ENCODE measurements at regions of chr14 and their contacts with region 1.

Region 1: GRCh38 chr14:55085060-55085660 is 33.7 kb downstream of the MAPK1IP1L start:
- DNase-seq: no peak
- H3K4me3 Mint-ChIP-seq: no peak overlapping the region
- H3K27ac Mint-ChIP-seq: no peak overlapping the region
- H3K4me1 Mint-ChIP-seq: no peaks in the 10 kb centered on the region
- H3K27me3 Mint-ChIP-seq: no peaks in the 10 kb centered on the region
- CTCF ChIP-seq: no peak

Region 2: GRCh38 chr14:55019968-55020554 is 65.1 kb before region 1 on chr14:
- CTCF ChIA-PET with region 1: no interaction called
- POLR2A ChIA-PET with region 1: no interaction called
- intact Hi-C with region 1: no loop called
- DNase-seq: no peak
- H3K4me3 Mint-ChIP-seq: no peak overlapping the region
- H3K27ac Mint-ChIP-seq: peak overlapping the region; percentile 6
- H3K4me1 Mint-ChIP-seq: peaks cover under 1% of the 10 kb centered on the region
- H3K27me3 Mint-ChIP-seq: no peaks in the 10 kb centered on the region
- CTCF ChIP-seq: no peak

Region 3: DNA sequence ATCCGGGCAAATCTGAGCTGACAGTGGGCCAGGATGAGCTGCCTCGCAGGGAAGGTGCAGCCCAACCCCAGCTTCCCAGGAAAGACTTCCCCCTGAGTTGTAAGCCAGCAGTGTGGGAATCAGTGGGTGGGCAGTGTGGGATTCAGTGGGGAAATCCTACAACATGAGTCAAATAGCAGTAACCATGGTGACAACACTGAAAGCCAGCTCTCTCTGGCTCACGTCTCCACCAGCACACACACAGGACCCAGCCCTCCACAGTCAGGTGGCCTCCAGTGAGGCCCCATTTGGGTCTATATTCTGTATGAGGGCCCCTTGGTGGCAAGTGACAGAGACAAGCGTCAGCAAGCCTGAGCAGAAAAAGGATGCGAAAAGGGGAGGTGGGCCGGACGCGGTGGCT is 37.9 kb after region 1 on chr14:
- CTCF ChIA-PET with region 1: no interaction called
- POLR2A ChIA-PET with region 1: no interaction called
- intact Hi-C with region 1: no loop called
- DNase-seq: peak; percentile 61
- H3K4me3 Mint-ChIP-seq: no peak overlapping the region
- H3K27ac Mint-ChIP-seq: peak overlapping the region; percentile 52
- H3K4me1 Mint-ChIP-seq: peaks cover 30% of the 10 kb centered on the region
- H3K27me3 Mint-ChIP-seq: no peaks in the 10 kb centered on the region
- CTCF ChIP-seq: no peak

Region 4: GRCh38 chr14:55160989-55161388 is 75.8 kb after region 1 on chr14:
- CTCF ChIA-PET with region 1: interaction called, 77 read pairs
- POLR2A ChIA-PET with region 1: interaction called, 7 read pairs
- intact Hi-C with region 1: loop called (anchors 1 kb)
- DNase-seq: peak; percentile 37
- H3K4me3 Mint-ChIP-seq: no peak overlapping the region
- H3K27ac Mint-ChIP-seq: peak overlapping the region; percentile 14
- H3K4me1 Mint-ChIP-seq: peaks cover 6% of the 10 kb centered on the region
- H3K27me3 Mint-ChIP-seq: no peaks in the 10 kb centered on the region
- CTCF ChIP-seq: peak; percentile 46

Region 5: GRCh38 chr14:55624913-55625312 is 539.8 kb after region 1 on chr14:
- CTCF ChIA-PET with region 1: no interaction called
- POLR2A ChIA-PET with region 1: no interaction called
- intact Hi-C with region 1: no loop called
- DNase-seq: no peak
- H3K4me3 Mint-ChIP-seq: no peak overlapping the region
- H3K27ac Mint-ChIP-seq: no peak overlapping the region
- H3K4me1 Mint-ChIP-seq: peaks cover 8% of the 10 kb centered on the region
- H3K27me3 Mint-ChIP-seq: no peaks in the 10 kb centered on the region
- CTCF ChIP-seq: no peak